BJ (cell line): ENCODE measurements at regions of chr19 and their contacts with region 1.

Region 1: DNA sequence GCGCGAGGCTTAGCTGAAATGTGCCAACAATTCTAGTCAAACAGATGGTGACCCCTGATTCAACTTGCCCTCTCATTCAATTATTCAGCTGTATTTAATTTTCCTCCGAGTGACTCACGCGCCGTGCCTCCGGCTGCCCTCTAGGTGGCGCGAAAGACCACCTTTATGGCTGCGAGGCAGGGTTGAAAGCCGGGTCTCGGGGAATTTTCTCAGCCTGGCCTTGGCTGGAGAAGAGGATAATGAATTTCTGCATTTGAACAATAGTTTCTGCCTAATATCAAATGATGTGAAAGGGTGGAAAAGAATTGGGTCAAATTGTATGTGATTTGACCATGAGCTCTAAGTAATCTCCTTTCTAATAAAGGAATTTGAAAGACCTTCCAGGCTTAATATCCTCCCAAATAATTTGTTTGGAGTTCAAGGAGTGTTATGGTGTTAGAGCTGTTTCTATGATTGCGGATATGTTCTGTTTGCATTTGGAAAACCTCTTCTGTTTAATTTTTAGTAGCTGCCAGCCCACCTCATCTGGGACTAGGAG is 310.9 kb downstream of the ZNF536 start:
- DNase-seq: peak; percentile 66
- H3K4me3 ChIP-seq: no peak overlapping the region
- H3K27me3 ChIP-seq: peaks cover 10% of the 10 kb centered on the region
- CTCF ChIP-seq: peak; percentile 89

Region 2: DNA sequence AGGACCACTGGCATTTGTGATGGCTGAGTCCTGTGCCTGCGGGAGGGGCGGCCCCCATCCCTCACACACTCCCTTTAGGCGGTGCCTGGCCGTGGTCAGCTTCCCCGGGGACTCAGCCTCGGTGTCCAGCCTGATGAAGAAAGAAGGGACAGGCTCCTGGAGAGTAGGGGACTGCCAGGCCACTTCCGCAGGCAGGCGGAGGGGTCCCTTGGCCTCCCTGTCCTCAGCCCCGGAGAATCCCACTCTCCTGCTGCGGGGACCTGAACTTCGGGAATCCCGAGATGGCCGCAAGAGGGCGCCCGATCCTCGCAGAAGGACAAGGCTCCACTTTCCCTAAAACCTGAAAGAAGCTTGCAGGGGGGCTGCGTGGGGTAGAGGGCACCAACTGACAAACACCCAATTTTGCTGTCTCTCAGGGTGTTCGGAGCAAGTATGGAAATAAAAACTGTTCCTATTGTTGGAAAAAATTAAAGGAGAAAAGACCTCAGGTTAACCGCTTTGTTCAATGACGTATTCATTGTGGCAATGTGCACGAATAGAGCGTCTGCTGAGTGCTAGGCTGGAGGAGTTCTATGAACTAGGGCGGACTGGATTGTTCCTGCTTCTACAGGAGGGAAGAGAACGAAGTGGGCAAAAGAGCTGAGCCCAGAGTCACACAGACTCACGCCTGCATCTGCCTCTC is 13.6 kb before region 1 on chr19:
- CTCF ChIA-PET with region 1: interaction called, 27 read pairs
- POLR2A ChIA-PET with region 1: no interaction called
- DNase-seq: no peak
- H3K4me3 ChIP-seq: no peak overlapping the region
- H3K27me3 ChIP-seq: 0 out of 2 replicates have a peak, but pooled peaks cover 2% of the 10 kb centered on the region
- CTCF ChIP-seq: peak; percentile 87